ENCODE measurements at regions of chr10 and their contacts with region 1.

Region 1: GRCh38 chr10:68301790-68302502 is 29.9 kb upstream of the HNRNPH3 start:
- DNase-seq: no peak
- H3K4me3 Mint-ChIP-seq: no peak overlapping the region
- H3K27ac Mint-ChIP-seq: no peak overlapping the region
- H3K4me1 Mint-ChIP-seq: no peaks in the 10 kb centered on the region
- H3K27me3 Mint-ChIP-seq: no peaks in the 10 kb centered on the region

Region 2: DNA sequence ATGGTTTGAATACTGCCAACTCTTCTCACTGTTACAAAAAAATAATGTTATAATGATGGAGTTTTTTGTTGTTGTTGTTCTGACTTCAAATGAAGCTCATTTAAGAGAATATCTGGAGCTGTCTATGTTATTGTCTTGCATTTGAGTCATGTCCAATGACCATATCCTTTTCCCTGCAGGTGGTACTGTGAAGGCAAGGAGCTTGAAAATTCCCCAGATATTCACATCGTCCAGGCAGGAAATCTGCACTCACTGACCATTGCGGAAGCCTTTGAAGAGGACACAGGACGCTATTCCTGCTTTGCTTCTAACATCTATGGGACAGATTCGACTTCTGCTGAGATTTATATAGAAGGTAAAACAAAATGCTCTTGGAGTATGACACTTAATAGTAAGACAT is 159.2 kb before region 1 on chr10:
- CTCF ChIA-PET with region 1: no interaction called
- intact Hi-C with region 1: no loop called
- DNase-seq: no peak
- H3K4me3 Mint-ChIP-seq: no peak overlapping the region
- H3K27ac Mint-ChIP-seq: no peak overlapping the region
- H3K4me1 Mint-ChIP-seq: no peaks in the 10 kb centered on the region
- H3K27me3 Mint-ChIP-seq: peaks cover 6% of the 10 kb centered on the region

Region 3: GRCh38 chr10:68231106-68231816 is 70.7 kb before region 1 on chr10:
- CTCF ChIA-PET with region 1: interaction called, 5 read pairs
- intact Hi-C with region 1: loop called (anchors 5 kb)
- DNase-seq: peak; percentile 38
- H3K4me3 Mint-ChIP-seq: peak overlapping the region; percentile 71
- H3K27ac Mint-ChIP-seq: no peak overlapping the region
- H3K4me1 Mint-ChIP-seq: peaks cover 7% of the 10 kb centered on the region
- H3K27me3 Mint-ChIP-seq: peaks cover 35% of the 10 kb centered on the region

Region 4: GRCh38 chr10:68315582-68315981 is 13.6 kb after region 1 on chr10:
- CTCF ChIA-PET with region 1: interaction called, 24 read pairs
- intact Hi-C with region 1: no loop called
- DNase-seq: no peak
- H3K4me3 Mint-ChIP-seq: no peak overlapping the region
- H3K27ac Mint-ChIP-seq: no peak overlapping the region
- H3K4me1 Mint-ChIP-seq: peaks cover 5% of the 10 kb centered on the region
- H3K27me3 Mint-ChIP-seq: no peaks in the 10 kb centered on the region

Measured in activated naive CD4-positive, alpha-beta T cell treated with anti-CD3 and anti-CD28 coated beads for 36 hours (primary cell).